A549 (cell line): ENCODE measurements at regions of chr14 and their contacts with region 1.

Region 1: DNA sequence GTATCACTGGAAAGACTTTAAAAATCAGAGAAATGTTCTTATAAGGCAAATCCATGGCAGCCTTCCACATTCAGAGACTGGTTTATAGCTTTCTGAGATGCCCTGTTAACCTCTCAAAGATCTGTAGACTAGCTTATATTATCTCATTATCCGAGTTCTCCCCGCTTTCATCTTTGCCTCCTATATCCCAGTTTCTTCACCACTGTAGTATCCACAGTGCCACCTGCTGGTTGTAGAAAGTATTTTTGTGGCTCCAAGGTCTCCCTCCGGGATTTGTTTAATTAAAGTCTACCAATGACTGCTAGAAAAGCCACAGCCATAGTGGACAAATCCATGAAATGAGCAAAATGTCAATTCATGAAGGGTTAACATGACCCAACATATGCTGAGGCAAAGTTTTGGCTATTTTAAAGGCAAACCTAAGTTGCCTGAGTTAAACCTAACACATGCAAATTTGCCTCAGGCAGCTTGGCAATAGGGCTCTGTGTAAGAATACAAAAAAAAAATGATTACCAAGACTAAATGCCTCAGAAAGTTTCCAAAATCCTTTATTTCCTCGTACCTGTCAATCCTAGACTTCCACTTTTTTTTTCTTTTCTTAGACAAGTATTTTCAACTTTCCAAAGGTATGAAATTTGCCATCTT is 218.8 kb upstream of the BMP4 start:
- DNase-seq: peak; percentile 55 to 75
- ATAC-seq: peak; percentile 74 to 84; a peak in 5 of 6 replicates
- H3K4me3 ChIP-seq: no peak overlapping the region
- H3K27ac ChIP-seq: no peak overlapping the region
- H3K4me1 ChIP-seq: no peaks in the 10 kb centered on the region
- CTCF ChIP-seq: peak; percentile 85
- EP300 ChIP-seq: no peak
- POLR2A ChIP-seq: no peak
- RAD21 ChIP-seq: peak; percentile 83 to 84

Region 2: DNA sequence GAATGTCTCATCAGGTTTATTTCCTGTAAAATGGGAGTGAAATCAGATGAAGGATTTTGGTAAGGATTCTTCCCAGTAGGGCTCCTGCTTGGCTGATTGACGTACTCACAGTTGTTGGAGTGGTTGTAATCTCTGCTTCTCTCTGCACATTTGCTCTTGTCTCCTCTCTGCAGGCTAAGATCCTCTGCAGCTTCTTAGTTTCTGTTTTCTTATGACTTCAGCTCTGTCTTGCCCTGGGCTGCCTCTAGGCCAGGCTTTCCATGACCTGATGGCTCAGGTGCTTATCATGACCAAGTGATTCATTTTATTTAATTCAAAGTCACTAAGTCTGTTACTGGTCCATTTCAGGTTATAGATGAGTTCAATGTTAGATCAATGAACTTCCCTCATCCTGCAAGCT is 627.8 kb before region 1 on chr14:
- CTCF ChIA-PET with region 1: interaction called, 10 read pairs
- POLR2A ChIA-PET with region 1: no interaction called
- DNase-seq: no peak
- ATAC-seq: no peak
- H3K4me3 ChIP-seq: no peak overlapping the region
- H3K27ac ChIP-seq: no peak overlapping the region
- H3K4me1 ChIP-seq: peaks cover 5% of the 10 kb centered on the region; the same call in 2 of the 3 replicates
- CTCF ChIP-seq: no peak
- EP300 ChIP-seq: no peak
- POLR2A ChIP-seq: no peak
- RAD21 ChIP-seq: no peak

Region 3: GRCh38 chr14:54094765-54095164 is 80.7 kb before region 1 on chr14:
- CTCF ChIA-PET with region 1: no interaction called
- POLR2A ChIA-PET with region 1: no interaction called
- DNase-seq: no peak
- ATAC-seq: no peak
- H3K4me3 ChIP-seq: no peak overlapping the region
- H3K27ac ChIP-seq: no peak overlapping the region
- H3K4me1 ChIP-seq: no peaks in the 10 kb centered on the region
- CTCF ChIP-seq: no peak
- EP300 ChIP-seq: no peak
- POLR2A ChIP-seq: no peak
- RAD21 ChIP-seq: no peak

Region 4: GRCh38 chr14:54186821-54187763 is 11.7 kb after region 1 on chr14:
- CTCF ChIA-PET with region 1: interaction called, 12 read pairs
- POLR2A ChIA-PET with region 1: no interaction called
- DNase-seq: no peak
- ATAC-seq: no peak
- H3K4me3 ChIP-seq: no peak overlapping the region
- H3K27ac ChIP-seq: no peak overlapping the region
- H3K4me1 ChIP-seq: peaks cover 6% of the 10 kb centered on the region; the same call in 2 of the 3 replicates
- CTCF ChIP-seq: no peak
- EP300 ChIP-seq: no peak
- POLR2A ChIP-seq: no peak
- RAD21 ChIP-seq: no peak

Region 5: DNA sequence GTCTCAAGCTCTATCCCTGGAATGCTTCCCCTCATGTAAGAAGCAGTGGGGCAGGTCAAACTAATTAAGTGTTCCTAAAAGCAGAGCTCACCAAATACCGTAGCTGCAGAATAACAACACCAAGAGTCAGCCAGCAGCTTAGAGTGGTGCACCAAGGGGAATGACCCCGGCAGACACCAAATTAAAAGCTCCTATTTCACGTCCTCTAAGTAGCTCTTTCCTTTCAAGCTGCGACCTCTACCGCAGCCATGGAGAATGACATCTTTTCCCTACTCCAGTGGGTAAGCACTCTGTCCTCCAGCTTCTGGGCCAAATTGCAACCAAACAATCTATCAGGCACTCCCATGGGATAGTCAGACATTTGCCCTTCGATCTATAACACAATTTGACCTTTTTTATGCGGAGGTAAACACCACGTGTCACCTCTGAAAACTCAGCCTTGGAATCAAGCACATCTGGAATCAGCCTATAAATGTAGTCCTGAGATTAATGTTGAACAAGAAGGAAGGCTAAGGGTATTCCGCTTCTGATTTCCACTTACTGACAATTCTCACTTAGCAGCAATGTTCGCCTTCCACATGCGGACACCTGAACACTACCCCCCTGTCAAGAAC is 153.8 kb after region 1 on chr14:
- CTCF ChIA-PET with region 1: interaction called, 11 read pairs
- POLR2A ChIA-PET with region 1: no interaction called
- DNase-seq: peak; percentile 60 to 70
- ATAC-seq: peak; percentile 85 to 96
- H3K4me3 ChIP-seq: no peak overlapping the region
- H3K27ac ChIP-seq: no peak overlapping the region
- H3K4me1 ChIP-seq: no peaks in the 10 kb centered on the region
- CTCF ChIP-seq: peak; percentile 68
- EP300 ChIP-seq: no peak
- POLR2A ChIP-seq: no peak
- RAD21 ChIP-seq: peak; percentile 79 to 82